Activated CD8-positive, alpha-beta memory T cell treated with anti-CD3 and anti-CD28 coated beads, Interleukin-2, amount 10 ng/mL, durations not matched to agents 7 days and 5 days (primary cell): ENCODE measurements at regions of chr19 and their contacts with region 1.

Region 1: GRCh38 chr19:1275260-1275975 is at the start of gene FAM174C:
- DNase-seq: peak; percentile 98
- ATAC-seq: peak; percentile 87
- H3K4me3 Mint-ChIP-seq: peak within 1 kb of the TSS; percentile 74
- H3K27ac Mint-ChIP-seq: peak within 1 kb of the TSS; percentile 88
- H3K4me1 Mint-ChIP-seq: peaks cover 56% of the 10 kb centered on the region
- H3K27me3 Mint-ChIP-seq: no peaks in the 10 kb centered on the region
- total RNA-seq, gene FAM174C: 54.7 to 60.3 TPM

Region 2: GRCh38 chr19:1232652-1233072 is 42.8 kb before region 1 on chr19:
- CTCF ChIA-PET with region 1: no interaction called
- DNase-seq: no peak
- ATAC-seq: no peak
- H3K4me3 Mint-ChIP-seq: no peak overlapping the region
- H3K27ac Mint-ChIP-seq: no peak overlapping the region
- H3K4me1 Mint-ChIP-seq: no peaks in the 10 kb centered on the region
- H3K27me3 Mint-ChIP-seq: peaks cover 3% of the 10 kb centered on the region

Region 3: GRCh38 chr19:1295169-1296012 is 20.0 kb after region 1 on chr19:
- CTCF ChIA-PET with region 1: no interaction called
- DNase-seq: no peak
- ATAC-seq: peak; percentile 66
- H3K4me3 Mint-ChIP-seq: no peak overlapping the region
- H3K27ac Mint-ChIP-seq: no peak overlapping the region
- H3K4me1 Mint-ChIP-seq: no peaks in the 10 kb centered on the region
- H3K27me3 Mint-ChIP-seq: peaks cover 7% of the 10 kb centered on the region

Region 4: GRCh38 chr19:1373534-1374249 is 98.3 kb after region 1 on chr19:
- CTCF ChIA-PET with region 1: interaction called, 40 read pairs
- DNase-seq: no peak
- ATAC-seq: no peak
- H3K4me3 Mint-ChIP-seq: no peak overlapping the region
- H3K27ac Mint-ChIP-seq: no peak overlapping the region
- H3K4me1 Mint-ChIP-seq: no peaks in the 10 kb centered on the region
- H3K27me3 Mint-ChIP-seq: no peaks in the 10 kb centered on the region

Region 5: GRCh38 chr19:1383311-1384084 is 108.1 kb after region 1 on chr19 and contains the start of gene NDUFS7:
- CTCF ChIA-PET with region 1: interaction called, 12 read pairs
- DNase-seq: peak; percentile 94
- ATAC-seq: peak; percentile 90
- H3K4me3 Mint-ChIP-seq: peak within 1 kb of the TSS; percentile 89
- H3K27ac Mint-ChIP-seq: peak within 1 kb of the TSS; percentile 95
- H3K4me1 Mint-ChIP-seq: peaks cover 21% of the 10 kb centered on the region
- H3K27me3 Mint-ChIP-seq: peaks cover 6% of the 10 kb centered on the region
- total RNA-seq, gene NDUFS7: 124 to 135 TPM

Region 6: GRCh38 chr19:1408300-1409203 is 133.1 kb after region 1 on chr19:
- CTCF ChIA-PET with region 1: interaction called, 12 read pairs
- DNase-seq: peak; percentile 74
- ATAC-seq: peak; percentile 11
- H3K4me3 Mint-ChIP-seq: peak overlapping the region; percentile 88
- H3K27ac Mint-ChIP-seq: peak overlapping the region; percentile 81
- H3K4me1 Mint-ChIP-seq: peaks cover 55% of the 10 kb centered on the region
- H3K27me3 Mint-ChIP-seq: no peaks in the 10 kb centered on the region

Region 7: DNA sequence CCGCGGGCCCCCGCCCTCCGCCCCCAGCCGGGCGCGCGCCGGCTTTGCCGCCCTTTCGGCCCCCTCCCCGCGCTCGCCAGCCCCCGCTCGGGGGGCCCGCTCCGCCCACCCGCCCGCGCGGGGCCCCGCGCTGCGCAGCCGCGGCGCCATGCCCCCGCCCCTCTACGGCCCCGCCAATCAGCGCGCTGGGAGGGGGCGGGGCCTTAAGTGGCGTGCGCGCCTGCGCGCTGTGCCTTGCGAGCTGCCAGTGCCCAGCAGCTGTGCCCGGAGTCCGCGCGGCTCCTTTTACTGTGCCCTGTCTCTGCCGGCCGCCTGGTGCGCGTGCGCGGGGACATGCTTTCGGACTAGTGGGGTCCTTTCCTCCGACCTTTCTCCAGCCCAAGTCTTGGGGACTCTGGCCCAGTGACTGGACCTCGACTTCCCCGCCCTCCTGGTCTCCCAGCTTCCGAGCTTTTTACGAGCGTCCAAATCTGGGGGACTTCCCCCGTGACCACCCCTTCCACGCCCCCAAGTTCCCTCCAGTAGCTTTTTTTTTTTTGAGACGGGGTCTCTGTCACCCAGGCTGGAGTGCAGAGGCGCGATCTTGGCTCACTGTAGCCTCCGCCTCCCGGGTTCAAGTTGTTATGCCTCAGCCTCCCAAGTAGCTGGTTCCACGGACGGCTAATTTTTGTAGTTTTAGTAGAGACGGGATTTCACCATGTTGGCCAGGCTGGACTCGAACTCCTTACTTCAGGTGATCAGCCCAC is 317.5 kb after region 1 on chr19 and contains the start of gene MBD3:
- CTCF ChIA-PET with region 1: no interaction called
- DNase-seq: peak; percentile 91
- ATAC-seq: peak; percentile 83
- H3K4me3 Mint-ChIP-seq: peak within 1 kb of the TSS; percentile 88
- H3K27ac Mint-ChIP-seq: peak within 1 kb of the TSS; percentile 89
- H3K4me1 Mint-ChIP-seq: peaks cover 19% of the 10 kb centered on the region
- H3K27me3 Mint-ChIP-seq: no peaks in the 10 kb centered on the region
- total RNA-seq, gene MBD3: 87.4 to 101 TPM